PC-3 (cell line): ENCODE measurements at regions of chr7 and their contacts with region 1.

Region 1: GRCh38 chr7:78232806-78233205 is 434.2 kb downstream of the PHTF2 start:
- DNase-seq: no peak
- ATAC-seq: no peak
- H3K4me3 ChIP-seq: no peak overlapping the region
- H3K27ac ChIP-seq: no peak overlapping the region
- H3K4me1 ChIP-seq: no peaks in the 10 kb centered on the region
- H3K27me3 ChIP-seq: 0 out of 2 replicates have a peak, but pooled peaks cover 7% of the 10 kb centered on the region
- CTCF ChIP-seq: no peak

Region 2: GRCh38 chr7:78254726-78255055 is 21.9 kb after region 1 on chr7:
- CTCF ChIA-PET with region 1: interaction called, 13 read pairs
- POLR2A ChIA-PET with region 1: no interaction called
- intact Hi-C with region 1: no loop called
- DNase-seq: no peak
- ATAC-seq: no peak
- H3K4me3 ChIP-seq: no peak overlapping the region
- H3K27ac ChIP-seq: no peak overlapping the region
- H3K4me1 ChIP-seq: no peaks in the 10 kb centered on the region
- H3K27me3 ChIP-seq: peaks cover 26% of the 10 kb centered on the region
- CTCF ChIP-seq: no peak